A673 (cell line): ENCODE measurements at regions of chr4 and their contacts with region 1.

Region 1: DNA sequence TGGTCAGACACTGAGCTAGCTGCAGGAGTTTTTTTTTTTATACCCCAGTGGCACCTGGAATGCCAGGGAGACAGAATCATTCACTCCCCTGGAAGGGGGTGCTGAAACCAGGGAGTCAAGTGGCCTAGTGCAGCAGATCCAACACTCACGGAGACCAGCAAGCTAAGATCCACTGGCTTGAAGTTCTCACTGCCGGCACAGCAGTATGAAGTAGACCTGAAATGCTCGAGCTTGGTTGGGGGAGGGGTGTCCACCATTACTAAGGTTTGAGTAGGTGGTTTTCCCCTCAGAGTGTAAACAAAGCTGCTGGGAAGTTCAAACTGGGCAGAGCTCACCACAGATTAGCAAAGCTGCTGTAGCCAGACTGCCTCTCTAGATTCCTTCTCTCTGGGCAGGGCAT is 537.9 kb upstream of the LCORL start:
- DNase-seq: no peak
- H3K4me3 ChIP-seq: no peak overlapping the region
- H3K27ac ChIP-seq: no peak overlapping the region
- H3K4me1 ChIP-seq: no peaks in the 10 kb centered on the region
- H3K27me3 ChIP-seq: no peaks in the 10 kb centered on the region
- CTCF ChIP-seq: no peak

Region 2: GRCh38 chr4:18039113-18039512 is 520.4 kb before region 1 on chr4:
- CTCF ChIA-PET with region 1: no interaction called
- POLR2A ChIA-PET with region 1: interaction called, 11 read pairs
- intact Hi-C with region 1: no loop called
- DNase-seq: no peak
- H3K4me3 ChIP-seq: no peak overlapping the region
- H3K27ac ChIP-seq: no peak overlapping the region
- H3K4me1 ChIP-seq: no peaks in the 10 kb centered on the region
- H3K27me3 ChIP-seq: no peaks in the 10 kb centered on the region
- CTCF ChIP-seq: no peak